ENCODE measurements at regions of chr12 and their contacts with region 1.

Region 1: GRCh38 chr12:56104109-56104814 is at the start of gene PA2G4:
- DNase-seq: peak; percentile 99
- H3K4me3 Mint-ChIP-seq: peak within 1 kb of the TSS; percentile 99
- H3K27ac Mint-ChIP-seq: peak within 1 kb of the TSS; percentile 98
- H3K4me1 Mint-ChIP-seq: peaks cover 53% of the 10 kb centered on the region
- H3K27me3 Mint-ChIP-seq: no peaks in the 10 kb centered on the region
- total RNA-seq, gene PA2G4: 242 to 243 TPM

Region 2: GRCh38 chr12:56041552-56042429 is 62.5 kb before region 1 on chr12 and contains the start of gene RPS26:
- CTCF ChIA-PET with region 1: interaction called, 36 read pairs
- POLR2A ChIA-PET with region 1: interaction called, 56 read pairs
- DNase-seq: peak; percentile 94
- H3K4me3 Mint-ChIP-seq: peak within 1 kb of the TSS; percentile 100
- H3K27ac Mint-ChIP-seq: peak within 1 kb of the TSS; percentile 99
- H3K4me1 Mint-ChIP-seq: peaks cover 60% of the 10 kb centered on the region
- H3K27me3 Mint-ChIP-seq: no peaks in the 10 kb centered on the region
- total RNA-seq, gene RPS26: 30.4 to 35.0 TPM

Region 3: GRCh38 chr12:56084958-56085543 is 19.2 kb before region 1 on chr12:
- CTCF ChIA-PET with region 1: interaction called, 60 read pairs
- POLR2A ChIA-PET with region 1: interaction called, 36 read pairs
- DNase-seq: peak; percentile 47
- H3K4me3 Mint-ChIP-seq: no peak overlapping the region
- H3K27ac Mint-ChIP-seq: no peak overlapping the region
- H3K4me1 Mint-ChIP-seq: peaks cover 8% of the 10 kb centered on the region
- H3K27me3 Mint-ChIP-seq: peaks cover 29% of the 10 kb centered on the region

Region 4: GRCh38 chr12:56152318-56153033 is 48.2 kb after region 1 on chr12 and contains the start of gene MYL6B:
- CTCF ChIA-PET with region 1: interaction called, 3 read pairs
- POLR2A ChIA-PET with region 1: interaction called, 16 read pairs
- DNase-seq: peak; percentile 97
- H3K4me3 Mint-ChIP-seq: peak within 1 kb of the TSS; percentile 94
- H3K27ac Mint-ChIP-seq: peak within 1 kb of the TSS; percentile 100
- H3K4me1 Mint-ChIP-seq: peaks cover 54% of the 10 kb centered on the region
- H3K27me3 Mint-ChIP-seq: no peaks in the 10 kb centered on the region
- total RNA-seq, gene MYL6B: 60.4 to 63.2 TPM

Measured in activated CD4-positive, alpha-beta memory T cell treated with anti-CD3 and anti-CD28 coated beads, Interleukin-2, amount 10 ng/mL, durations not matched to agents 7 days and 5 days (primary cell).